Activated T-helper 2 cell treated with anti-CD3 and anti-CD28 coated beads, Interferon-gamma antibody, Interleukin-2, Interleukin-4, amounts not matched to agents 10 μg/mL and 5 μg/mL and 100 μg/mL, durations not matched to agents 14 hours and 24 hours and 36 hours (primary cell): ENCODE measurements at regions of chr9 and their contacts with region 1.

Region 1: GRCh38 chr9:133532937-133533668 is 1.4 kb upstream of the ADAMTSL2 start:
- DNase-seq: peak; percentile 53
- H3K4me3 Mint-ChIP-seq: no peak overlapping the region
- H3K27ac Mint-ChIP-seq: no peak overlapping the region
- H3K4me1 Mint-ChIP-seq: no peaks in the 10 kb centered on the region
- H3K27me3 Mint-ChIP-seq: peaks cover 16% of the 10 kb centered on the region

Region 2: GRCh38 chr9:133449760-133450159 is 83.3 kb before region 1 on chr9:
- intact Hi-C with region 1: no loop called
- DNase-seq: no peak
- H3K4me3 Mint-ChIP-seq: no peak overlapping the region
- H3K27ac Mint-ChIP-seq: no peak overlapping the region
- H3K4me1 Mint-ChIP-seq: no peaks in the 10 kb centered on the region
- H3K27me3 Mint-ChIP-seq: no peaks in the 10 kb centered on the region

Region 3: DNA sequence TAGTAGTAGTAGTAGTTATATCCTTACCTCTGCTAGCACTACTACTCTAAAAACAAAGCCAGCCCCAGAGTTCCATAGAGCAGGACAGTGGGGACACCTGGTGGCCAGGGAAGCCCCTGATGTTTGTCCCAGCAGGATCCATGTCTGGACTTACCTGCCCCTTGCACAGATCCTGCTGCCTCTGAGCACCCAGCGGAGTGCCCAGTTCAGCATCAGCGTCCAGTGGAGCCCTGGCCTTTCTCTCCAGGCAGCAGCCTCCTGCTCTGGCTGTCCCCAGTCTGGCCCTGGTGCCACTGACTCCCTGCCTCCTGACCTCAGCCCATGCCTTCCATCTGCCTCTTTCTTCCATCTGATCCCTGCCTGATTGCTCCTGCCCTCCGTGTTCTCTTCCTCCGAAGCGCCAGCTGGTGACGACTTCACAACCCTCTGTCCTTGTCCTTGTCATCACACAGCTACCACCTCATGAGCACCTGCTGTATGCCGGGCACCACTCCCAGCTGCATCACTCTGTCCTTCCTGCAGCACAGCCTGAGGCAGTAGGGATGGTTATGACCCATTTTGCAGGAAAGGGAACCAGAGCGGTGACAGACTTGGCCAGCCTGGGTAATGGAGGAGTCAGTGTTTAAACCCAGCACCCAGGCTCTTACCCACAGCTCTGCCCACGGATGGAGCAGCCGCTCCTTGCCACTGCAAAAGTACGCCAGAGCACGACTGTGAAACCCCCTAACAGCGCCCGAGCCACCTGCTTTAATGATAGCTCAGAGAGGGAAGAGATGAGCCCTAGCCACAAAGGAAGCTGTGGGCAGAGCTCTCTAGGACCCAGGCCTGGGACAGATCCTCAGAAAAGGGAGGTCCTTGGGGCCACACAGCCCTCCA is 193.5 kb after region 1 on chr9:
- intact Hi-C with region 1: loop called (anchors 5 kb)
- DNase-seq: no peak
- H3K4me3 Mint-ChIP-seq: no peak overlapping the region
- H3K27ac Mint-ChIP-seq: no peak overlapping the region
- H3K4me1 Mint-ChIP-seq: peaks cover 7% of the 10 kb centered on the region
- H3K27me3 Mint-ChIP-seq: peaks cover 7% of the 10 kb centered on the region